ENCODE measurements at regions of chr17 and their contacts with region 1.

Region 1: DNA sequence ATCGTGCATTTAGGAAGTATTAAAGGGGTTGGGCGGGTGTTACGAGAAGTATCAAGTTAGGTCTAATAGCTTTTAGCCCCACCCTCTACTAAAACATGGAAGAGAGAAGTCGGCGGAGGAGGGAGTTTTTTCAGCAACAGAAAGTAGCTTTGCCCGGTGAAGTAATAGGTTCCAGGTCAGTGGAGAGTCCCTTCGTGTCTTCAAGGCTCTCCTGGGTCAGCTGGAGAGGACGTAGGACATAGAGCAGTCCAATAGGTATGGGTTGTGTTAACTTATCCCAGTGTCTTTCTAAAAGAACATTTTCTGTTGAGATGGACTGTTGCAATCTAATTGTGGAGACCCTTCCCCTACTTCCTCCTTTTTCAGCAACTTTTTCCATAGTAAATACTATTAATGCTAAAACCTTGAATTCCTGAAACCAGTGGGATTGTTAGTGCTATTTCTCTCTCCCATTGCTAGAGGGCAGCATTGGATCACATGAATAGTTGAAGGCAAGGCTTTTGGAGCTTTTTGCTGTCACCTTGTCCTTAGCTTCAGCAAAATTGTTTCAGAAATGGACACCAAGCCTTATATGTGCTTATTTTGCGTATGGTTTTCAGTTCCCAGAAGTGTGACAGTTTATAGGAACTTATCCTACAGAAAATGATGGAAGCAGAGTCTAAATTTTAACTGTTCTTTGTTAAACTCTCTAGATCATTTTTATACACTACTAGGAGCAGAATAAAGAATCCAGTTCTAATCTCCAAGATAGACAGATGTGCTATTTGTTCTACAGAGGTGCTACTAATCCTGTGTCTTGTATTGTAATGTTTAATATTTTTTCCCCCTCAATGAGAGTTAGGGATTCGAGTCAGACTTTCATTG is 38.4 kb downstream of the UTP18 start:
- DNase-seq: peak; percentile 51 to 67
- ATAC-seq: peak; percentile 79 to 82
- H3K4me3 ChIP-seq: no peak overlapping the region
- H3K27ac ChIP-seq: no peak overlapping the region
- H3K4me1 ChIP-seq: no peaks in the 10 kb centered on the region
- CTCF ChIP-seq: peak; percentile 89
- EP300 ChIP-seq: no peak
- POLR2A ChIP-seq: no peak
- RAD21 ChIP-seq: peak; percentile 80 to 82

Region 2: DNA sequence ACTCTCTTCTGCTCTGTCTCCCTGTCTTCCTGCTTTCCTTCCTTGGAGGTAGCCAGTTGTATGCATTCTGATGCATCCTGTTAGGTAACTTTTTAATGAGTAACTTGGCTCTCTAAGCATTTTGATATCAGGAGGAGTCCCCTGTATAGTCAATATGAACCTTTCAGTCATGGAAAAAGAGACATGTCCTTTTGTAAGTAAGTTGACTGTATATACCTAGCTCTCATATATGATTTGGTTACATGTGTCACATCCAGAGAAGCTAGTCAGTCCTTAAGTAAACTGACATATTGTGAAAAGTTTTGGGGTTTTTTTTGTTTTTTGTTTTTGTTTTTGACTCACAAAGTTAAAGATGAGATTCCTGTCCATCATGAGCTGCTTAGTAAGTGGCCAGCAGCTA is 19.6 kb before region 1 on chr17:
- CTCF ChIA-PET with region 1: interaction called, 13 read pairs
- POLR2A ChIA-PET with region 1: no interaction called
- DNase-seq: no peak
- ATAC-seq: no peak
- H3K4me3 ChIP-seq: no peak overlapping the region
- H3K27ac ChIP-seq: no peak overlapping the region
- H3K4me1 ChIP-seq: no peaks in the 10 kb centered on the region
- CTCF ChIP-seq: no peak
- EP300 ChIP-seq: no peak
- POLR2A ChIP-seq: no peak
- RAD21 ChIP-seq: no peak

Region 3: GRCh38 chr17:51319186-51319585 is 20.4 kb after region 1 on chr17:
- CTCF ChIA-PET with region 1: interaction called, 20 read pairs
- POLR2A ChIA-PET with region 1: interaction called, 3 read pairs
- DNase-seq: no peak
- ATAC-seq: no peak
- H3K4me3 ChIP-seq: no peak overlapping the region
- H3K27ac ChIP-seq: no peak overlapping the region
- H3K4me1 ChIP-seq: no peaks in the 10 kb centered on the region
- CTCF ChIP-seq: no peak
- EP300 ChIP-seq: no peak
- POLR2A ChIP-seq: no peak
- RAD21 ChIP-seq: no peak

Region 4: DNA sequence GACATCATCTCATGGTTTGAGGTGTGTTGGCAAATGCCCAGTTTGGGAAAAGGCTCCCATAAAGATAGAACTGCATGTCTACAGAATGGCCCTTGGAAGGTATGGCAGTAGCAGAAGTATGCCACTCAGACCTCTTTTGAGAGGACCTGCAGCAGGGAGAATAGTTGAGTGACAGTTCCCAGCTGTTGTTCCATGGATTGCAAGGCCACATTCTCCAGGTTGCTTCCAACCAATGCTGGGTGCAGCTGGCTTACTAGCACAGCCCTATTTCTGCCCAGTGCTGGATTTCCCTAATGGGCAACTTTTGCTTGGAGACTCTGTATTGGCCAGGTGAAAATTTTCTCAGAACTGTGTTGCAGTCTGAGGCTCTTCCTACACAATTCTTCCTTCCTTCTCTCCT is 227.8 kb after region 1 on chr17:
- CTCF ChIA-PET with region 1: no interaction called
- POLR2A ChIA-PET with region 1: no interaction called
- DNase-seq: no peak
- ATAC-seq: no peak; a peak in 1 of 6 replicates
- H3K4me3 ChIP-seq: no peak overlapping the region
- H3K27ac ChIP-seq: no peak overlapping the region
- H3K4me1 ChIP-seq: no peaks in the 10 kb centered on the region
- CTCF ChIP-seq: no peak
- EP300 ChIP-seq: no peak
- POLR2A ChIP-seq: no peak
- RAD21 ChIP-seq: no peak

Measured in A549 (cell line).